ENCODE measurements at regions of chr17 and their contacts with region 1.

Region 1: GRCh38 chr17:28371245-28372202 is at the start of gene SARM1:
- DNase-seq: peak; percentile 91 to 95 (median 92)
- ATAC-seq: peak; percentile 78 to 90 (median 82)
- H3K4me3 ChIP-seq: peak within 1 kb of the TSS; percentile 47 to 85 (median 64)
- H3K27ac ChIP-seq: peak within 1 kb of the TSS; percentile 47 to 86 (median 78)
- H3K4me1 ChIP-seq: peaks cover 7 to 39% (median 25%) of the 10 kb centered on the region in 12 donors
- H3K27me3 ChIP-seq: no peaks in the 10 kb centered on the region
- CTCF ChIP-seq: no peak
- POLR2A ChIP-seq: peak in 1 of 2 donors; percentile 27
- total RNA-seq, gene SARM1: 4.7 to 11.3 (median 8.5) TPM

Region 2: GRCh38 chr17:28097901-28098300 is 273.6 kb before region 1 on chr17:
- intact Hi-C with region 1: no loop called
- DNase-seq: no peak
- ATAC-seq: peak in 1 of 4 donors; percentile 31
- H3K4me3 ChIP-seq: no peak overlapping the region
- H3K27ac ChIP-seq: no peak overlapping the region
- H3K4me1 ChIP-seq: peaks cover 0 to 21% (median 2%) of the 10 kb centered on the region in 12 donors
- H3K27me3 ChIP-seq: no peaks in the 10 kb centered on the region
- CTCF ChIP-seq: no peak
- POLR2A ChIP-seq: no peak

Region 3: GRCh38 chr17:28318759-28319660 is 52.5 kb before region 1 on chr17 and contains the start of gene TMEM97:
- intact Hi-C with region 1: loop called in 1 of 10 experiments (anchors 10 kb)
- DNase-seq: peak; percentile 96 to 98 (median 97)
- ATAC-seq: peak; percentile 99 to 100 (median 100)
- H3K4me3 ChIP-seq: peak within 1 kb of the TSS; percentile 28 to 82 (median 64)
- H3K27ac ChIP-seq: peak within 1 kb of the TSS in 6 of 12 donors; percentile 9 to 65 (median 40)
- H3K4me1 ChIP-seq: peaks cover 0 to 22% (median 15%) of the 10 kb centered on the region in 12 donors
- H3K27me3 ChIP-seq: no peaks in the 10 kb centered on the region
- CTCF ChIP-seq: peak in 5 of 12 donors; percentile 12 to 41 (median 22)
- POLR2A ChIP-seq: no peak
- total RNA-seq, gene TMEM97: 2.5 to 6.0 (median 3.3) TPM

Region 4: GRCh38 chr17:28484296-28484695 is 112.8 kb after region 1 on chr17:
- intact Hi-C with region 1: no loop called
- DNase-seq: no peak
- ATAC-seq: no peak
- H3K4me3 ChIP-seq: no peak overlapping the region
- H3K27ac ChIP-seq: no peak overlapping the region
- H3K4me1 ChIP-seq: no peaks in the 10 kb centered on the region
- H3K27me3 ChIP-seq: peaks cover 0 to 7% (median 0%) of the 10 kb centered on the region in 9 donors
- CTCF ChIP-seq: no peak
- POLR2A ChIP-seq: no peak